GM23248 (cell line): ENCODE measurements at regions of chr16 and their contacts with region 1.

Region 1: GRCh38 chr16:75495076-75495674 is at the start of gene CHST6:
- DNase-seq: peak; percentile 54
- H3K4me3 ChIP-seq: peak within 1 kb of the TSS; percentile 65
- H3K27ac ChIP-seq: no peak within 1 kb of the TSS
- H3K4me1 ChIP-seq: no peaks in the 10 kb centered on the region
- H3K27me3 ChIP-seq: no peaks in the 10 kb centered on the region; the same call in 1 of the 2 replicates
- total RNA-seq, gene CHST6: 0.65 and 0.76 TPM in 2 replicates

Region 2: DNA sequence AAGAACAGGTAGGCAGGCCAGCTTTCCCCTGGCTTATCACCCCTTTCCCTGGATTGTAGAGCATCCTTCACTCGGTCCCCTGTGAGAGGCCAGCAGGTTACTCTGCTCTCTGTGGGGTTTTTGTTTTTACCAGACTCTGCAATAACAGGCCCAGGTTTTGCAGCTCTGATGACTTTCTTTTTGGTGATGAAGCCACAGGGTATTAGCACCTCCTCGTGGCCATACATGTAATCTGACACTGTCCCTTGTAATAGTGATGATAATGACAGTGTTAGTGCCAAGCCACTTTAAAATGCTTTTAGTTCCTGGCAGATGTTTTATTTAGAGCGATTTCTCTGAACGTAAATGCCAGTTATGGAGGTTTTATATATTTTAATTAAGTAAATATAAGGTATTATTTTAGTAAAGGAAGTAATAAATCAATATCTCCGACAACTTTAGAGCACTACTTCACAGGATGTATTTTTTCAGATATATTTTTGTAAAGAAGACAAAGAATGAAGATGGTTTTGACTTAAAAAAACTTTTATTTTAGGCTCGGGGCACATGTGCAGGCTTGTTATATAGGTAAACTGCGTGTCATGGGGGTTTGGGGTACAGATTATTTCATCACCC is 269.1 kb after region 1 on chr16:
- in situ Hi-C with region 1: loop called (anchors 25 kb)
- DNase-seq: peak; percentile 79
- H3K4me3 ChIP-seq: no peak overlapping the region
- H3K27ac ChIP-seq: no peak overlapping the region
- H3K4me1 ChIP-seq: no peaks in the 10 kb centered on the region
- H3K27me3 ChIP-seq: peaks cover 9% of the 10 kb centered on the region; the same call in 1 of the 2 replicates

Region 3: DNA sequence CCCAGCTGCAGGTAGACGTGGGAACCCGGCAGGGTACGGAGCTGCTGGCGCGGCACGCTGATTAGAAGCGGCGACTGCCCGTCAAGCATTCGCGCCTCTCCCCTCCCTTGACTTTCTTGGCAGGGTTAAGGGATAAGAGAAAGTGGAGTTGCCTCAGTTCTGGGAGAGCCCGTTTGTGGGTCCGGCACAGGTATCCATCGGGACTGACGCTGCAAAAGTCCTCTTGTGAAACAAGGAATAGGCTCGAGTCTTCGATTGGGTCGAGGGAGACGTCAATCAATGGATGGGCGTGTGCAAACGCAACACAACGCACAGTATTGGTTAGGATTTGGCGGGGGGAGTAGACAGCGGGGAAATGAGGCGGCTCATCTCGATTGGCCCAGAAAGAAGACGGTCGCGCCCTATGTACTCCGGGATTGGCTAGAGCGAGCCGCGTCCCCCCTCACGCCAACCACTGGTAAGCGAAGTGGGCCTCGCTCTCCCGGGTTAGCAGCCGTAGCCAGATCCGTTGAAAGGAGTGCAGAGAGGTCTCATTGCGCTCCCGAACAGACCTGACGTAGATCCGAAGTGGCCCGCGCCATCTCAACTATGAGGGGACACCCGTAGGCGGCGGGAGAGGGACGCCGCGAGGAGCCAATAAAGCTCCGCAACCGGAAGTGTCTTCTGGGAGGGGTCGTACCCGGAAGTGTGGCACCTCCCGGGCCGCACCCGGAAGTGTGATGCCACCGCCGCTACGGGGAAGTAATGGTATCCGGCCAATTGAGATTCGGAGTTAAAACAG is 1695.5 kb after region 1 on chr16 and contains the start of gene MON1B:
- in situ Hi-C with region 1: loop called (anchors 25 kb)
- DNase-seq: peak; percentile 99
- H3K4me3 ChIP-seq: peak within 1 kb of the TSS; percentile 98
- H3K27ac ChIP-seq: peak within 1 kb of the TSS; percentile 87
- H3K4me1 ChIP-seq: peaks cover 6% of the 10 kb centered on the region
- H3K27me3 ChIP-seq: no peaks in the 10 kb centered on the region
- total RNA-seq, gene MON1B: 9.3 and 11.3 TPM in 2 replicates